ENCODE measurements at regions of chr19 and their contacts with region 1.

Region 1: DNA sequence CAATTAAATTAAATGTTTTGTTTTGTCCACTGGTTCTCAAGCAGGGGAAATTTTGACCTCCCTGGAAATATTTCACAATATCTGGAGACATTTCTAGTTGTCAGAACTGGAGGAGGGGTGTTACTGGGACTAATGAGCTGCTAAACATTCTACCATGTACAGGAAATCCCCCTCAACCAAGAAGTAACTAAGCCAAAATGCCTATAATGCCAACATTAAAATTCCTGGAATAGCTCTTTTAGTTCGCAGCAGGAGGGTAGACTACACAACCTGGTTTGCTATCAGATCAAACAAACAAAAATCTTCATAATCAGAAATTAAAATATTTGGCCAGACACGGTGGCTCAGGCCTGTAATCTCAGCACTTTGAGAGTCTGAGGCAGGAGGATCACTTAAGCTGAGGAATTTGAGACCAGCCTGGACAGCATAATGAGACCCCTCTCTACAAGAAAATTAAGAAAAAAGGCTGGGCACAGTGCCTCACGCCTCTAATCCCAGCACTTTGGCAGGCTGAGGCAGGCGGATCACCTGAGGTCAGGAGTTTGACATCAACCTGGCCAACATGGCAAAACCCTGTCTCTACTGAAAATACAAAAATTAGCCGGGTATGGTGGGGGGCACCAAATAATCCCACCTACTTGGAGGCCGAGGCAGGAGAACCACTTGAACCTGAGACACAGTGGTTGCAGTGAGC is 13.7 kb upstream of the SMARCA4 start:
- DNase-seq: no peak
- H3K4me3 ChIP-seq: no peak overlapping the region
- H3K4me3 Mint-ChIP-seq: no peak overlapping the region
- H3K27ac ChIP-seq: no peak overlapping the region
- H3K27ac Mint-ChIP-seq: no peak overlapping the region
- H3K4me1 ChIP-seq: peaks cover 0 to under 1% of the 10 kb centered on the region in 2 donors
- H3K4me1 Mint-ChIP-seq: no peaks in the 10 kb centered on the region
- H3K27me3 ChIP-seq: no peaks in the 10 kb centered on the region
- H3K27me3 Mint-ChIP-seq: no peaks in the 10 kb centered on the region
- CTCF ChIP-seq: no peak

Region 2: DNA sequence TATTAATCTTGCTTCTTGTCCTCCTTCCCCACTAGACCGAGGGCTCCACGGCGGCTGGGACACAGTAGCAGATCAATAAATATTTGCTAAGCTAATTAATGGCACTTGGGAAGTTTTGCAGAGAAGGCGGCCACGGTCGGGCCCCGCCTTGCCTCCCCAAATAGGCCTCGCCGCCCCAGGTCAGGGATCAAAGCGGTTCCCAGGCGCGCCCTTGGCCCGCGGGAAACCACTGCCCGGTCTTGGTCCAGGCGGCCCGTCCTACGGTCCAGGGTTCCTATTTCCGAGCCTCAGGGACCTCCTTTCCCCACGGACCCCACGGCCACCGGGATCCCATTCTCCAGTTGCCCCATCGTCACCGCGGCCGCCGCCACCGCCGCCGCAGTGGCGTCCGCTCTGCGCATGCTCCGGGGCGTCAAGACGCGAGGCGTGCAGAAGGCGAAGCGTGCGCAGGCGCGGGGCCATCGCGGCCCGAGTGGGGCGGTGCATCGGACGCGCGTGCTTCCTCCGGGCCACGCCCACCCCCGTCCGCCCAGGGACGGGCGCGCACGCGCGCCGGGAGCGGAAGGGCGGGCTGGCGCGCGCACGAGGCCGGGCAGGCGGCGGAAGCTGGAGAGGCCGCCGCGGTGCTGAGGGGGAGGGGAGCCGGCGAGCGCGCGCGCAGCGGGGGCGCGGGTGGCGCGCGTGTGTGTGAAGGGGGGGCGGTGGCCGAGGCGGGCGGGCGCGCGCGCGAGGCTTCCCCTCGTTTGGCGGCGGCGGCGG is 13.4 kb after region 1 on chr19 and contains the start of gene SMARCA4:
- intact Hi-C with region 1: no loop called
- DNase-seq: peak; percentile 97 to 98 (median 98)
- H3K4me3 ChIP-seq: peak within 1 kb of the TSS; percentile 73 to 88 (median 81)
- H3K4me3 Mint-ChIP-seq: peak within 1 kb of the TSS; percentile 96 to 97
- H3K27ac ChIP-seq: peak within 1 kb of the TSS; percentile 64 to 92
- H3K27ac Mint-ChIP-seq: peak within 1 kb of the TSS; percentile 85 to 94 (median 91)
- H3K4me1 ChIP-seq: peaks cover 16 to 31% of the 10 kb centered on the region in 2 donors
- H3K4me1 Mint-ChIP-seq: peaks cover 30% of the 10 kb centered on the region
- H3K27me3 ChIP-seq: no peaks in the 10 kb centered on the region
- H3K27me3 Mint-ChIP-seq: peaks cover 0 to 2% (median 0%) of the 10 kb centered on the region in 3 donors
- CTCF ChIP-seq: no peak
- polyA plus RNA-seq, gene SMARCA4: 5.1 to 53.3 (median 7.0) TPM

Region 3: DNA sequence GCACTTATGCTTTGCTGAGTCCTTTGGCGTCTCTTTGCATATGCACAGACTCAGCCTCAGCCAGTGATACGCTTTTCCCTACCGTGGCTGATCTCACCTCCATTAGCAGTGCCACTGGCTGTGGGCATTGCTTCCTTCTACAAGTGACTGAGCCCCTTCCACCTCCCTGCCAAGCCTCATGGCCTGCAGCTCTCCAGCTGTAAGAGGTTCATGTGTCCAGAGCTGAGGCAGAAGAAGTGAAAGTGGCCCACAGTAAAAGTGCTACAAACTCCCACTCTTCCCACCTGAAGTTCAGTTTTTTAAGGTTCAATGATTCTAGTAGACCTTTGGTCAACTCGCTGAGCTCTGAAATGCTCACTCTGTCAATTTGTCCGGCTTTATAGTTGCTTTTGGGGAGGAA is 58.4 kb after region 1 on chr19:
- intact Hi-C with region 1: loop called in 1 of 2 experiments (anchors 10 kb)
- DNase-seq: no peak
- H3K4me3 ChIP-seq: no peak overlapping the region
- H3K4me3 Mint-ChIP-seq: no peak overlapping the region
- H3K27ac ChIP-seq: peak overlapping the region in 1 of 2 donors; percentile 50
- H3K27ac Mint-ChIP-seq: peak overlapping the region in 5 of 7 donors; percentile 14 to 83 (median 45)
- H3K4me1 ChIP-seq: peaks cover 8 to 24% of the 10 kb centered on the region in 2 donors
- H3K4me1 Mint-ChIP-seq: peaks cover 28% of the 10 kb centered on the region
- H3K27me3 ChIP-seq: no peaks in the 10 kb centered on the region
- H3K27me3 Mint-ChIP-seq: peaks cover 0 to 4% (median 0%) of the 10 kb centered on the region in 3 donors
- CTCF ChIP-seq: no peak

Measured in CD14-positive monocyte (primary cell).